Adrenal gland (tissue), 19 donors: ENCODE measurements at regions of chr7 and their contacts with region 1.

Region 1: GRCh38 chr7:2680792-2681490 is 7.1 kb upstream of the AMZ1 start:
- DNase-seq: peak; percentile 80 to 93 (median 89)
- H3K4me3 ChIP-seq: no peak overlapping the region
- H3K27ac ChIP-seq: no peak overlapping the region
- H3K4me1 ChIP-seq: no peaks in the 10 kb centered on the region
- H3K27me3 ChIP-seq: peaks cover 1% of the 10 kb centered on the region
- CTCF ChIP-seq: peak; percentile 59 to 88 (median 76)
- POLR2A ChIP-seq: no peak

Region 2: DNA sequence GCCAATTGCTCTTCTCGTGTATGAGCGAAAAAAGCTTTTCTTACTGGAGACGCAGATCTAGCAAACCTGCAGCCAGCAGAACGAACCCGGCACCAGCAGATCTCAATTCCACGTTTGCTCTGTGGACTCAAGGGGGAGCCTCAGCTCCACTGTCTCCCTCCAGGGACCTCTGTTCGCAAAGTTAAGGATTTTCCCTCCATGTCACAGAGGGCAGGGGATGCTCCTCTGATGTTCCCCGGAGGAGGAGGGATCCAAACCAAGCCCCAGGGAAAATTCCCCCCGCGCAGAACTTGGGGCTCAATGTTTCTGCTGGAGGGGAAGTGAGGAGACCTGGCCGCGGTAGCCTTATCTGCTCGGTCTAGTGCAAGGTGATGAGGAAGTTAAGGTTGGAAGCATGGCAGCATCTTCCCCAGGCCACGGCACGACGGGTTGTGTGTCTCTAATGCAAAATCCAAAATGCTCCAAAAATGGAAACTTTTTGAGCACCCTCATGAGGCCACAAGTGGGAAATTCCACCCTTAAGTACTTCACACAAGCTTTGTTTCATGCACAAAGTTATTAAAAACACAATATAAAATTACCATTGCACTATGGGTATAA is 113.2 kb before region 1 on chr7:
- intact Hi-C with region 1: loop called in 1 of 2 experiments (anchors 10 kb)
- DNase-seq: peak in 3 of 7 donors; percentile 35 to 71 (median 51)
- H3K4me3 ChIP-seq: no peak overlapping the region
- H3K27ac ChIP-seq: no peak overlapping the region
- H3K4me1 ChIP-seq: peaks cover 2 to 15% of the 10 kb centered on the region in 2 donors
- H3K27me3 ChIP-seq: no peaks in the 10 kb centered on the region
- CTCF ChIP-seq: peak; percentile 12 to 58 (median 40)
- POLR2A ChIP-seq: no peak

Region 3: DNA sequence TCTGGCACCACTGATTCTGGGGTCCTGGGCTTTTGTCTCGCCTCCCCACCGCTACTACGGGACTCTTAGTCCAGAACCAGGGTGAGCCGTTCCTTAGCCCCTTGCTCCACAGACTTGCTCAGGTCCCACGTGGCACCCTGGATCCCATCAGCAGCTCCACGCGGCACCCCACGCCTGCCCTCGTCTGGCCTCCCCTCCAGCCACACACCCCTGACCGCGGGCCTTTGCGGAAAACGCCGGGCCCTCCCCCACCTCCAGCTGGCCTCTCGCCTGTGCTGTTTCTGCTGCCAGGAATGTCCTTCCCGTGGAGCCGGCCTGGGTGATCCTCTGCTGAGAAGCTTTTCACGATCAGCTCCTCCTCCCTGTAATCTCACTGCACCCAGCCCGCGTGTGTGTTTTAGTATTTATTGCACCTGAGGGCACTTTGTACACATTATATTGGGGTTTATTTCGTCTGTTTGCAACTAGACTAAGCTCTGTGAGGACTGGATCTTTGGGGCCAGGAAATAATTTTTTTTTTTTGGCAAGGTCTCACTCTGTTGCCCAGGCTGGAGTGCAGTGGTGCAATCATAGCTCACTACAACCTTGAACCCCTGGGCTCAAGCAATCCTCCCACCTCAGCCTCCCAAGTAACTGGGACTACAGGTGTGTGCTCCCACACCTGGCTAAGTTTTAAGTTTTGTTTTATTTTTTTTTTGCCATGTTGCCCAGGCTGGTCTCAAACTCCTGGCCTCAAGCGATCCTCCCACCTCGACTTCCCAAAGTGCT is 59.7 kb before region 1 on chr7:
- intact Hi-C with region 1: no loop called
- DNase-seq: peak; percentile 69 to 86 (median 77)
- H3K4me3 ChIP-seq: no peak overlapping the region
- H3K27ac ChIP-seq: peak overlapping the region in 2 of 5 donors; percentile 53 to 62
- H3K4me1 ChIP-seq: peaks cover 28 to 55% of the 10 kb centered on the region in 2 donors
- H3K27me3 ChIP-seq: no peaks in the 10 kb centered on the region
- CTCF ChIP-seq: no peak
- POLR2A ChIP-seq: no peak

Region 4: GRCh38 chr7:2738766-2739549 is 58.0 kb after region 1 on chr7:
- intact Hi-C with region 1: no loop called
- DNase-seq: peak in 3 of 7 donors; percentile 0 to 53 (median 22)
- H3K4me3 ChIP-seq: no peak overlapping the region
- H3K27ac ChIP-seq: peak overlapping the region in 1 of 5 donors; percentile 45
- H3K4me1 ChIP-seq: peaks cover 0 to 29% of the 10 kb centered on the region in 2 donors
- H3K27me3 ChIP-seq: no peaks in the 10 kb centered on the region
- CTCF ChIP-seq: no peak
- POLR2A ChIP-seq: no peak

Region 5: GRCh38 chr7:2820508-2820934 is 139.6 kb after region 1 on chr7:
- intact Hi-C with region 1: no loop called
- DNase-seq: peak; percentile 51 to 95 (median 90)
- H3K4me3 ChIP-seq: no peak overlapping the region
- H3K27ac ChIP-seq: peak overlapping the region in 3 of 5 donors; percentile 77 to 78 (median 77)
- H3K4me1 ChIP-seq: peaks cover 24 to 65% of the 10 kb centered on the region in 2 donors
- H3K27me3 ChIP-seq: no peaks in the 10 kb centered on the region
- CTCF ChIP-seq: no peak
- POLR2A ChIP-seq: no peak

Region 6: GRCh38 chr7:3439333-3440030 is 758.5 kb after region 1 on chr7:
- intact Hi-C with region 1: no loop called
- DNase-seq: no peak
- H3K4me3 ChIP-seq: no peak overlapping the region
- H3K27ac ChIP-seq: no peak overlapping the region
- H3K4me1 ChIP-seq: no peaks in the 10 kb centered on the region
- H3K27me3 ChIP-seq: no peaks in the 10 kb centered on the region
- CTCF ChIP-seq: no peak
- POLR2A ChIP-seq: no peak